HCT116 (cell line): ENCODE measurements at regions of chr1 and their contacts with region 1.

Region 1: DNA sequence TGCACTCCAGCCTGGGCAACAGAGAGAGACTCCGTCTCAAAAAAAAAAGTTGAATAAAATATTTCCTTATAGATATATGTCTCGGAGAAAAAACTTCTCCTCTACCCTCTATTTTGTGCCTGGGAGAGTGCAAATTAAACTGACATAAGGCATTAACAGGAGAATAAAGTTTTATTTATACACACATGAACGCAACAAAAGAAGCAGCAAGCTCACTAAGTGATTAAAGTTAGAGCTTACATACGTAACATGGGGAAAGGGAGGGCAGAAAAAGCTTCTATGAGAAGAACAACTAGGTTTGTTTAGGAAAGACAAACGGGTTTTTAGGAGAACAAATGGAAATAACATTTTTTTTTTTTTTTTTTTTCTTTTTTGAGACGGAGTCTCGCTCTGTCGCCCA is 126.5 kb downstream of the PATJ start:
- DNase-seq: no peak
- ATAC-seq: no peak
- H3K4me3 ChIP-seq: no peak overlapping the region
- H3K27ac ChIP-seq: no peak overlapping the region
- H3K4me1 ChIP-seq: no peaks in the 10 kb centered on the region
- H3K27me3 ChIP-seq: no peaks in the 10 kb centered on the region
- CTCF ChIP-seq: no peak
- POLR2A ChIP-seq: no peak
- RAD21 ChIP-seq: no peak

Region 2: DNA sequence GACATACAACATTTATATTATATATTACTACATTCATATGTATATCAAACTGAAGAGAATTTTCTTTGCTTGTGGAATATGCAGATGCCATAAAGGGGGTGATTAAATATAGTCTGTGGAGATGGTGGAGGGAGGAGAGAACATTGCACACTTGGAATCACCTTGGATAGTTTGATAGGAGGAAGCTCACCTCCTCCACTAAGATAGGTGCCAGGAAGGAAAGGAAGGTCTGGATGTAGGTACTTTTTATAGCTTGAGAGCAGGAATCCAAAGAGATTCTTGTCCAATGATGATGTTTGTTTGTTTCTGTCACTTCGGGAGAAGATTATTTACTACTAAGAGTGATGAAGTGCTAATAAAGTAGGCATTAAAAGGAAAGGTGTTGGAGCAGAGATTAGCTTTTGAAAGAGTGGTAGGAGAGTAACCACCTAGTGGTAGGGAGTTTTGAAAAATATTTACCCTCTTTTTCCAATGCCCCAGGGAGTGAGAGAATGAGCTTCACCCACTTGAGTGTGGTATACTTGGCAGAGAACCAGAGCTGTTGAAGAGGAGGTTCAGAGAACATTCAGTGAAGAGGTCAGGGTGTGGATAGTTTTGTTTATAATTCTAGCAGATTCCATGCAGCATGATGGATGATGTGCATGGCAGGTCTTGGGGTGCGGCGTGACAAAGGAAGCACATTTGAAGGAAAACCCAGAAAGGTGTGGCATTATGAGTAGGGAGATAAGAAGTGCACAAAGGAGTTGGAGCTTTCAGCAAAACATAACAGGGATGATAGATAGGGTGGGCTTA is 18.5 kb after region 1 on chr1:
- CTCF ChIA-PET with region 1: no interaction called
- POLR2A ChIA-PET with region 1: no interaction called
- RAD21 ChIA-PET with region 1: no interaction called
- intact Hi-C with region 1: loop called (anchors 1 kb)
- DNase-seq: no peak
- ATAC-seq: no peak
- H3K4me3 ChIP-seq: no peak overlapping the region
- H3K27ac ChIP-seq: no peak overlapping the region
- H3K4me1 ChIP-seq: peaks cover 0 to 4% of the 10 kb centered on the region in 2 experiments; a peak in 2 of 4 replicates
- H3K27me3 ChIP-seq: no peaks in the 10 kb centered on the region
- CTCF ChIP-seq: no peak
- POLR2A ChIP-seq: no peak
- RAD21 ChIP-seq: no peak